MCF 10A (cell line): ENCODE measurements at regions of chr1 and their contacts with region 1.

Region 1: DNA sequence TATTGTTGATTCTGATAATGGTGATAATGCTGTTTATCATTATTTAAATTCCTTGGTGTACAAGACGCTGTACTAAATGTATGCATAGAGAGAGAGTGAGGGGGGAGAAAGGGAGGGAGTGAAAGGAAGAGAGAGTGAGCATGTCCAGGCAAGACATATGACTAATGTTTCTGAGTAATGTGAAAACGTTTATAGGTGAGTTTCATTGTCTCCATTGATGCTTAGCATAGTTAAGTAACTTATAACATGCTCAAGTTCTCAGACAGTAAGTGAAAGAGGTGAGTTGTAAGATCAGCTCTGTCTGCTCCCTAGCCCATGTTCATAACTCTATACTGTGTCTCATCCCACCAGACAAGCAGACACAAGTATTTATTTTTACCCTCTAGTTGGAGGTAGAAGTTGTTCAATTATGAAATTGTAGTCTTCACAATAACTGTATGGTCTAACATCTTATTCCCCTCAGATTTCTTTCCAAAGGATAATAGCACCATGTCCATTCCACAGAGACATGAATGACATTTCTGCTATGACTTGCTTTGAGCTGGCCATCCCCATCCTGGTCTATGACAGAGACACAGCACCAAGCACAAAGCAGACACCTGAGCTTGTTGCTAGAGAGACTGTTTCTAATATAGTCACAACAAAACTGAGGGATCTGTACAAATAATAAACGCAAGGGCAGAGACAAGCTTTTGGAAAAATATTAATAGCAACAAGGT is 285.1 kb downstream of the CACNA1E start:
- DNase-seq: peak; percentile 88
- H3K4me3 Mint-ChIP-seq: no peak overlapping the region
- H3K27ac Mint-ChIP-seq: peak overlapping the region; percentile 87
- H3K4me1 Mint-ChIP-seq: peaks cover 20% of the 10 kb centered on the region
- H3K27me3 Mint-ChIP-seq: no peaks in the 10 kb centered on the region
- CTCF ChIP-seq: no peak

Region 2: DNA sequence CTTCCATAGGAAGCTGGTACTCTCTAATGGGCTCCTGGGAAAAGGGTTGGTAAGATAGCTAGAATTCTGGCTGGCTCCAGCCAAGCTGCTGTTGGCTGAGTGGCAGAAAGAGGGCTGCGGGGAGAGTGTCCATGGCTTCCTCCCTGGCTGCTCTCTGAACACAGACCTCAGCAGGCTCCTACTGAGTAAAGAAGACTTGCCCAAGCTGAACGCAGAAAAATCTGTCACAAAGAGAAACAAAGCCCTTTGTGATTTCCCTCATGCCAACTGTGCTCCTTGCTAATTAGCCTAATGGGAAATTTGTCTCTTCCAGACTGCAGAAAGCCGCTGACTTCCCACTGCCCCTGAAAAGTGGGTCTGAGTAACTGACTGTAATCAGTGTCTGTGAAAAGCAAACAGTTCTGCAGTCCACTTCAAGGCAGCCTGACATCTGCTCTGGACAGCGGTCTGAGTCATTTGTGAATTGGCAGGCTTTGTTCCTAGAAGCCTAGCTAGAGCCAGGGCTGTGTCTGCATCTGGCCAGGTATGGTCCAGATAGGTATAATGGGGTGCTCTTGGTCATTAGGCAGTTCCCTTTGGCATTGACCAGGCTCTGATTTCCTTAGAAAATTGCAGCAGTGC is 10.4 kb after region 1 on chr1:
- CTCF ChIA-PET with region 1: no interaction called
- POLR2A ChIA-PET with region 1: interaction called, 25 read pairs
- intact Hi-C with region 1: no loop called
- DNase-seq: peak; percentile 49
- H3K4me3 Mint-ChIP-seq: no peak overlapping the region
- H3K27ac Mint-ChIP-seq: no peak overlapping the region
- H3K4me1 Mint-ChIP-seq: peaks cover 5% of the 10 kb centered on the region
- H3K27me3 Mint-ChIP-seq: no peaks in the 10 kb centered on the region
- CTCF ChIP-seq: no peak

Region 3: GRCh38 chr1:181784039-181784683 is 15.8 kb after region 1 on chr1:
- CTCF ChIA-PET with region 1: interaction called, 3 read pairs
- POLR2A ChIA-PET with region 1: interaction called, 25 read pairs
- intact Hi-C with region 1: no loop called
- DNase-seq: peak; percentile 81
- H3K4me3 Mint-ChIP-seq: no peak overlapping the region
- H3K27ac Mint-ChIP-seq: no peak overlapping the region
- H3K4me1 Mint-ChIP-seq: no peaks in the 10 kb centered on the region
- H3K27me3 Mint-ChIP-seq: no peaks in the 10 kb centered on the region
- CTCF ChIP-seq: no peak

Region 4: DNA sequence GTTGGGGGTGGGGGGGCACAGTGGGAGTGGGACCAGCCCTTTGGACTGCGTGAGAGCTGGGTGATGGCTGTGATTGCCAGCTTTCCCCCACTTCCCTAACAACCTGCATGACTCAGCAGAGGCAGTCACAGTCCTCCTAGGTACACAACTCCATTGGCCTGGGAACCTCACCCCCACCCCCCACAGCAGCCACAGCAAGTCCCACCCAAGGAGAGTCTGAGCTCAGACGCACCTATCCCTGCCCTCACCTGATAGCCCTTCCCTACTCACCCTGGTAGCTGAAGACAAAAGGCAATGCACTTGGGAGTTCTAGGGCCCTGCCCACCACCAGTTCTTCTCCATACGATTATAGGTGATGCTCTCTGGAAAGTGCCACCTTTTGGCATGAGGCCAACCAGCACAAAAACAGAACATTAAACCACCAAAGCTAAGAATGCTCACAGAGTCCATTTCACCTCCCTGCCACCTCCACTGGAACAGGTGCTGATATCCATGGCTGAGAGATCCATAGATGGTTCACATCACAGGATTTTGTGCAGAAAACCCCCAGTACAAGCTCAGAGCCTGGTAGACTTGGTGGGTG is 104.3 kb after region 1 on chr1:
- CTCF ChIA-PET with region 1: no interaction called
- POLR2A ChIA-PET with region 1: no interaction called
- intact Hi-C with region 1: no loop called
- DNase-seq: no peak
- H3K4me3 Mint-ChIP-seq: no peak overlapping the region
- H3K27ac Mint-ChIP-seq: no peak overlapping the region
- H3K4me1 Mint-ChIP-seq: no peaks in the 10 kb centered on the region
- H3K27me3 Mint-ChIP-seq: peaks cover 38% of the 10 kb centered on the region
- CTCF ChIP-seq: no peak